Activated T-helper 1 cell treated with anti-CD3 and anti-CD28 coated beads, Interleukin-12 subunit alpha, Interleukin-12 subunit beta, Interleukin-2, Interleukin-4 antibody, amounts not matched to agents 30 ng/mL and 10 ng/mL and 1 ng/mL, durations not matched to agents 14 hours and 24 hours and 36 hours (primary cell): ENCODE measurements at regions of chr9 and their contacts with region 1.

Region 1: GRCh38 chr9:5437254-5438216 is at the start of gene PLGRKT:
- DNase-seq: peak; percentile 90
- H3K4me3 Mint-ChIP-seq: peak within 1 kb of the TSS; percentile 93
- H3K27ac Mint-ChIP-seq: peak within 1 kb of the TSS; percentile 93
- H3K4me1 Mint-ChIP-seq: peaks cover 66% of the 10 kb centered on the region
- H3K27me3 Mint-ChIP-seq: no peaks in the 10 kb centered on the region
- total RNA-seq, gene PLGRKT: 43.8 and 44.8 TPM in 2 replicates

Region 2: GRCh38 chr9:4679268-4680172 is 758.0 kb before region 1 on chr9 and contains the start of gene CDC37L1:
- intact Hi-C with region 1: loop called (anchors 5 kb)
- DNase-seq: peak; percentile 98
- H3K4me3 Mint-ChIP-seq: no peak within 1 kb of the TSS
- H3K27ac Mint-ChIP-seq: no peak within 1 kb of the TSS
- H3K4me1 Mint-ChIP-seq: peaks cover 7% of the 10 kb centered on the region
- H3K27me3 Mint-ChIP-seq: no peaks in the 10 kb centered on the region
- total RNA-seq, gene CDC37L1: 11.1 and 11.3 TPM in 2 replicates

Region 3: GRCh38 chr9:4792572-4793458 is 644.7 kb before region 1 on chr9 and contains the start of gene RCL1:
- intact Hi-C with region 1: loop called (anchors 1 kb)
- DNase-seq: peak; percentile 99
- H3K4me3 Mint-ChIP-seq: peak within 1 kb of the TSS; percentile 96
- H3K27ac Mint-ChIP-seq: peak within 1 kb of the TSS; percentile 96
- H3K4me1 Mint-ChIP-seq: peaks cover 62% of the 10 kb centered on the region
- H3K27me3 Mint-ChIP-seq: no peaks in the 10 kb centered on the region
- total RNA-seq, gene RCL1: 53.3 and 53.4 TPM in 2 replicates

Region 4: DNA sequence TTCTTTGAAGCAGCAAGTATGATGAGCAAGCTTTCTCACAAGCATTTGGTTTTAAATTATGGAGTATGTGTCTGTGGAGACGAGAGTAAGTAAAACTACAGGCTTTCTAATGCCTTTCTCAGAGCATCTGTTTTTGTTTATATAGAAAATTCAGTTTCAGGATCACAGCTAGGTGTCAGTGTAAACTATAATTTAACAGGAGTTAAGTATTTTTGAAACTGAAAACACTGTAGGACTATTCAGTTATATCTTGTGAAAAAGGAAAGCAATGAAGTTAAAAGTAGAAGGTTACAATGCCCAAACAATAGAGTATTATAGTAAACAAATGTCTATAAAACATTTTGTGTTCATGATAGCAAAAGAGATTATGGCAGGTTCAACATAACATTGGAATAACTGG is 363.8 kb before region 1 on chr9:
- intact Hi-C with region 1: loop called (anchors 5 kb)
- DNase-seq: no peak
- H3K4me3 Mint-ChIP-seq: no peak overlapping the region
- H3K27ac Mint-ChIP-seq: no peak overlapping the region
- H3K4me1 Mint-ChIP-seq: peaks cover 22% of the 10 kb centered on the region
- H3K27me3 Mint-ChIP-seq: no peaks in the 10 kb centered on the region

Region 5: DNA sequence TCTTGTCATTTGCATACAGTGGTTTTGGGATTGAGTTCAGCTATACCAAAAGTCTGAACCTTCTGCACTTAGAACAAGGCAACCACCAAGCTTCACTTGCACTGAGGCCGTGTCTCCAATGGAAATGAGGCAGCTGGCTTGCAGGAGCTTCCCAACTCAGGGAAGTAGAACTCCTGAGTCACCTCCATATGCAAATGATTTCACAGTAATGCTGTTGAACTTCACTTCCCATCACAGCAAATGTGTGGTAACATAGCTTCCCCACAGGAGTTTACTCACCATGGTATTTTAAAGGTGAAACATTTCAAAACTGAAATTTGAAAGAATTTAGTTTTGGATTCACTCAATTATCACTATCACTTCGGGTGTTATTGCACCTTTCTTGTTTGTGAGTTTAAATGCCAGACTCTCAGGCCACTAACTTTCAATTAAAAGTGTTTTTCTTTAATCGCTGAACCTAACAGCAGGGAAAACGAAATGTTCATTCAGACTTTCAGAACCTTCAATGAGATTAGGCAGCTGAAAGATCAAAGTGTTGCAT is 21.8 kb after region 1 on chr9:
- intact Hi-C with region 1: loop called (anchors 1 kb)
- DNase-seq: no peak
- H3K4me3 Mint-ChIP-seq: peak overlapping the region; percentile 76
- H3K27ac Mint-ChIP-seq: peak overlapping the region; percentile 88
- H3K4me1 Mint-ChIP-seq: peaks cover 70% of the 10 kb centered on the region
- H3K27me3 Mint-ChIP-seq: no peaks in the 10 kb centered on the region

Region 6: DNA sequence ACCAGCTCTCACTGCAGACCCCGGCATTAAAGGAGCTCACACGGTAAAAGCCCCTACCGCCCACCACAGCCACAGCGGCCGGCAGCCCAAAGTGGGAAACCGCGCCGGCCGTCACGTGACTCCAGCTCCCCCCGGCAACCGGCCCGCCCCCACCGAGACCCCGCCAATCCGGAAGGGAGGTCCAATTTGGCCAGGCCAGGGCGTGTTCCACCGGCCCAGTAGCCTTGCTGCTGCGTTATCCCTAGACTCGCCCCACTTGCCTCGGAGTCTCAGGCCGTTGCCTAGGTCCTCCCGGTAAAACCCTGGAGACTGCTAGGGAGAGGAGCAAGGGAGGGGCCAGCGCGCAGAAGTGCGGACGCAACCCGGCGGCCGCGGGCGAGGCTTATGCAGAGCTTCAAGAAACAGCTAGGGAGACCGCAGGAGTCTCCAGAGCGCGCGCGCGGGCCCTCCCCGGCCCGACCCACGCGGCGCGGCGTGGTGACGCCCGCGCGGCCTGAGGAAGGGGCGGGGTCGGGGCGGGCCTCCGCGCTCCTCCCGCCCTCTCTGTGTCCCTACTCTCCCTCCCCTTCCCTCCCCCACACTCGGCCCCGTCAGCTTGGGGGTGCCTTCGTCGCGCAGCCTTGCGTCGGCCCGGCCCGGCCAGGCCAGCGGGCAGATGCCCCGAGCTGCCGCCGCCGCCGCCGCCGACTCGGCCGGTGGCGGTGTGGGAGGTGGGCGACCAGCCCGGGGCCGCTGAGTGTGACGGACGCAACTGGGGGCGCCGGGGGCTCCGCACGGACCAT is 191.2 kb after region 1 on chr9 and contains the start of gene RIC1:
- intact Hi-C with region 1: loop called (anchors 1 kb)
- DNase-seq: peak; percentile 90
- H3K4me3 Mint-ChIP-seq: peak within 1 kb of the TSS; percentile 99
- H3K27ac Mint-ChIP-seq: peak within 1 kb of the TSS; percentile 98
- H3K4me1 Mint-ChIP-seq: peaks cover 74% of the 10 kb centered on the region
- H3K27me3 Mint-ChIP-seq: no peaks in the 10 kb centered on the region
- total RNA-seq, gene RIC1: 20.9 and 22.3 TPM in 2 replicates